Endothelial cell of umbilical vein (primary cell): ENCODE measurements at regions of chr5 and their contacts with region 1.

Region 1: GRCh38 chr5:14142827-14143548 is at the start of gene TRIO:
- DNase-seq: peak; percentile 94
- H3K4me3 ChIP-seq: peak within 1 kb of the TSS; percentile 55 to 98 (median 91)
- H3K27ac ChIP-seq: peak within 1 kb of the TSS; percentile 94
- H3K4me1 ChIP-seq: peaks cover 33% of the 10 kb centered on the region
- H3K27me3 ChIP-seq: peaks cover 9 to 10% of the 10 kb centered on the region in 2 experiments
- CTCF ChIP-seq: peak; percentile 36 to 72
- POLR2A ChIP-seq: peak; percentile 85
- total RNA-seq, gene TRIO: 242 and 248 TPM in 2 replicates

Region 2: GRCh38 chr5:13987843-13988464 is 155.0 kb before region 1 on chr5:
- CTCF ChIA-PET with region 1: interaction called, 7 read pairs
- POLR2A ChIA-PET with region 1: no interaction called
- dilution Hi-C with region 1: no loop called
- intact Hi-C with region 1: loop called (anchors 2 kb)
- DNase-seq: peak; percentile 64
- H3K4me3 ChIP-seq: no peak overlapping the region
- H3K27ac ChIP-seq: no peak overlapping the region
- H3K4me1 ChIP-seq: peaks cover 16% of the 10 kb centered on the region
- H3K27me3 ChIP-seq: no peaks in the 10 kb centered on the region
- CTCF ChIP-seq: peak; percentile 69 to 84
- POLR2A ChIP-seq: no peak

Region 3: GRCh38 chr5:14156650-14157493 is 13.9 kb after region 1 on chr5:
- CTCF ChIA-PET with region 1: interaction called, 12 read pairs
- POLR2A ChIA-PET with region 1: interaction called, 8 read pairs
- dilution Hi-C with region 1: no loop called
- intact Hi-C with region 1: loop called (anchors 1 kb)
- DNase-seq: peak; percentile 91
- H3K4me3 ChIP-seq: peak overlapping the region in 1 of 3 experiments; percentile 49
- H3K27ac ChIP-seq: peak overlapping the region; percentile 97
- H3K4me1 ChIP-seq: peaks cover 55% of the 10 kb centered on the region
- H3K27me3 ChIP-seq: no peaks in the 10 kb centered on the region
- CTCF ChIP-seq: no peak
- POLR2A ChIP-seq: no peak

Region 4: DNA sequence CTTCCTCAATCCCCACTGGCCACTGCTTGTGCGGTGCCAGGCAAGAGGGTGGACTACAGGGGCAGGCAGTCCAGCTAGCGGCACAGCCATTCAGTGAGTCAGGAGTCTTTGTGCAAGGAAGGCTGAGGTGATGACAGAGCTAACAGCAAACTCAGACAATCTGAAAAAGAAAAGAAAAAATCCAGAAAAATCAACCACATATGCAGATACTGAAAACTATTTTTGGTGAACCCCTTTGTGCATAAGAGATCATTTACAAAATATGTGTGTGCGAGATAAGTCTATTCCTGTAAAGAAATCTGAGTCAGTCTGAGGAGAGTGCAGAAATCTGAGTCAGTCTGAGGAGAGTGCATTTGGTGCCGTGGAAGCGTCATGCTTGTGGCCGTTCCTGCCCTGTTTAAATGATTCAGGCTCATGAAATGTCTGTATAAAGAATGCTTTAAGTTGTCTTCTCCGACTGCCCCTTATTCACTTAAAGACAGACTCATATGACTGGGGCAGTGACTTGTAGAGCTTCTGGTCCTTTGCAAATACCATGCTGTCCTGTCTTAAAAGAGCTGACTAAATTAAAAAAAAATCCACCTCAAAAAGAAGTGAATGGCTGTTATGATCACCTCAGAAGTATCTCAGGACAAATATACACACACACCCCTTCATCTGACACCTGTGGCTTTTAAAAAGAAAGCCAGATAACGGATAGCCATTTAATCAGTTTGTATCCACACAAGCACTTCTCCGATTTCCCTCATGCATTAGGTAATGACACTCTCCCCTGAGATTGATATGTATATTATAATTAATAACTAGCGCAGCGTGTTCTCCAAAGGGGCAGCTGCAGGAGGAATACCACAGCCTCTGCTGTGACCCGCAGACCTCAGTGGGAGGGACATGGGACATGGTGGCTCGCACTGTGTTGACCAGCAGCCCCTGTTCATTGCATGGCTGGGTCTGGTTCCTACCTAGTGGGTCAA is 47.5 kb after region 1 on chr5:
- CTCF ChIA-PET with region 1: interaction called, 10 read pairs
- POLR2A ChIA-PET with region 1: interaction called, 3 read pairs
- dilution Hi-C with region 1: no loop called
- intact Hi-C with region 1: loop called (anchors 2 kb)
- DNase-seq: peak; percentile 93
- H3K4me3 ChIP-seq: no peak overlapping the region
- H3K27ac ChIP-seq: peak overlapping the region; percentile 74
- H3K4me1 ChIP-seq: peaks cover 86% of the 10 kb centered on the region
- H3K27me3 ChIP-seq: no peaks in the 10 kb centered on the region
- CTCF ChIP-seq: no peak
- POLR2A ChIP-seq: no peak

Region 5: GRCh38 chr5:14204785-14205321 is 61.9 kb after region 1 on chr5:
- CTCF ChIA-PET with region 1: interaction called, 4 read pairs
- POLR2A ChIA-PET with region 1: interaction called, 6 read pairs
- dilution Hi-C with region 1: no loop called
- intact Hi-C with region 1: loop called (anchors 1 kb)
- DNase-seq: peak; percentile 93
- H3K4me3 ChIP-seq: peak overlapping the region in 1 of 3 experiments; percentile 14
- H3K27ac ChIP-seq: peak overlapping the region; percentile 87
- H3K4me1 ChIP-seq: peaks cover 82% of the 10 kb centered on the region
- H3K27me3 ChIP-seq: no peaks in the 10 kb centered on the region
- CTCF ChIP-seq: no peak
- POLR2A ChIP-seq: no peak

Region 6: DNA sequence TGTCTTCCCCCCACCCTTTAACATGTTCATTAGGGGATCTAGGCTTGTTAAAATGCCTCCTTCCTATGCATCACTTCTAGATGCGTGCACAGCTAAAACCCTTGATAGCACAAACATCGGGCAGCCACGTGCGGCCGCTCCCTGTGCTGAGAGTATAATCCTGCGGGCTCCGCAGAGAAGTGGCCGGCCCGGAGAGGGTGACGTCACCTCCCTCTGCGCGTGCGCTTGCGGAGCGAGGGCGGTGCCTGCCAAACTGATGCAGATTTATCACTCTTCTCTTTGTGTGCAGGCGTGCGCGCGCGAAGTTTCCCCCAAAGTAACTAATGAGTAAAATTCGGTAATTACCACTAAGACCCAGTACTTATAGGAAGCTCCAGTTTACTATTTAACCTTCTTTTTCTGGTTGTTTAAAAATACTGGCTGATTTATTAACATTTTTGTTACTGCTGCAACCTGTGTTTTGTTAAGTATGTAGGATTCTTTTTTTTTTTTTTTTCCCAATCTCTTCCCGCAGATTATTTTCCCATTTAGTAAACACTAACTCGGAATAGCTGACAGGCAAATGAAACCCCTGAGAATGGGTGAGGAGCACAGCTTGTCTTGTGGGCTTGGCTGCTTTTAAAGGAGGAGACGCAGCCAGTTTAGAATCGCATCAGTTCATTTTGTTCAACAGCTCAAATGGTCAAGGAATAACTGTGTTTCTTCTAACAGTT is 121.8 kb after region 1 on chr5:
- CTCF ChIA-PET with region 1: interaction called, 38 read pairs
- POLR2A ChIA-PET with region 1: interaction called, 3 read pairs
- dilution Hi-C with region 1: loop called (anchors 25 kb)
- intact Hi-C with region 1: loop called (anchors 1 kb)
- DNase-seq: peak; percentile 96
- H3K4me3 ChIP-seq: peak overlapping the region in 2 of 3 experiments; percentile 2 to 51
- H3K27ac ChIP-seq: peak overlapping the region; percentile 76
- H3K4me1 ChIP-seq: peaks cover 71% of the 10 kb centered on the region
- H3K27me3 ChIP-seq: no peaks in the 10 kb centered on the region
- CTCF ChIP-seq: no peak
- POLR2A ChIP-seq: peak; percentile 22